ENCODE measurements at regions of chr6 and their contacts with region 1.

Region 1: DNA sequence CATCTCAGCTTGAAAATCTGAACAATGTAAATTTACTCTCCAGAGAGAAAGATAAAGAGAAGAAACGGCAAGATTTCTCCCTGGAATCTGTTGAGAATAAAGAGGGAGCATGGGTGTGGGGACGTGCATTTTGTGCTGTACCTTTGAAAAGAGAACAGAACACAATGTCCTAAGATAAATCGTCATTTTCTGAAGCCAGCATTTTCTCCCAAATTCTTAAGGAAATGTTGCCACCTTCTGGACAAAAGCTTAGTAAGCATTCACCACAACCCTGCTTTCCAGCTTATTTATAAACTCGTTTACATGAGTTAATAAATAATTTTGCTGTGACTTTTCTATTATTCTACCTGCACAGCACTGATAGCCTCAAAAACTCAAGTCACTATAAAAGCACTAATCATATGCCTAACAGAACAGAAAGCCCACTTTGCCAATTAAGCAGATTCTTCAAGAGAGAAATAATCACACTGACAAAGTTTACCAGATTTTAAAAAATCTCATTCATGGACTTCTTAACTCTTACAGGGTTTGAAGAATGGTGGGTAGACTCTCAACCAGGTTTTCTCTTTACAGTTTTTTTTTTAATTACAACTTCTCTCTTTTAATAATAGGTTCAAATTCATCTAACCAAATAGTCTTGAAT is 155.8 kb downstream of the MBOAT1 start:
- DNase-seq: no peak
- H3K4me3 ChIP-seq: no peak overlapping the region
- H3K27ac ChIP-seq: no peak overlapping the region
- H3K4me1 ChIP-seq: no peaks in the 10 kb centered on the region
- H3K27me3 ChIP-seq: no peaks in the 10 kb centered on the region
- CTCF ChIP-seq: peak; percentile 49 to 58

Region 2: DNA sequence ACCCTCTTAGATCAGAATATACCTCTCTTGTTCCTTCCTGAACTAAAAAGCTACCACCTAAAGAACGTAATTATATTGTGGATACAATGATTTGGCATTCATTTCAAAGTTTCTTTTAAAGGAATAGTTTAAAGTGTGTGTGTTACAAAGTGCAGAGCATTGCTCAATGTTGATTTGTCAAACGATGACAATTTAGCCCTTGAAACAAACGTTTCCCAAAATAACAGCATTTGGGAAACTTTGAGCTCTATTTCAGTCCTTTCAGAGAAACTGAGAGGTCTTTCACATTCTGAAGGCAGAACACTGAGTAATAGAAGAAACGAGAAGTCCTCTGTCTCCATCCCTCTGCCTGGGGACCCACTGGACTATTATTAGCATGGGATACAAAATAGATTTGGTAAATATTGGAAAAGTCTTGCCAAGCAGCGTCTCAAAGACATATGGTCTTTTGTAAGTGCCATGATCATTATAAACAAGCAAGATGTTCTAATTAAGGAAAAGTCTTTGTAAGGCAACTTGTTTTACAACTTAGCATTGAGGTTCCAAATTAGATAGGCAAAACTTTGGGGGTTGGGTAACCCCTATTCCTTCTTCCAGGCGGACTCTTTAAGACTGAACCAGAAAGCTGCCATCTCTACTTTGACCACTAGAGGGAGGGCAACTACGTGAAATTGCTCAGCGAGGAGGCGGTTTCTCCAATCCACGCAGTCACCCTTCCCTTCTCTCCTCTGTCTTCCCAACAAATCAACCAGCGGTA is 1460.5 kb before region 1 on chr6:
- intact Hi-C with region 1: loop called (anchors 10 kb)
- DNase-seq: peak; percentile 73 to 77
- H3K4me3 ChIP-seq: peak overlapping the region; percentile 6 to 13
- H3K27ac ChIP-seq: peak overlapping the region; percentile 53 to 63
- H3K4me1 ChIP-seq: peaks cover 0 to 21% (median 5%) of the 10 kb centered on the region in 4 donors
- H3K27me3 ChIP-seq: no peaks in the 10 kb centered on the region
- CTCF ChIP-seq: peak; percentile 88 to 89

Region 3: GRCh38 chr6:18748314-18748713 is 1308.2 kb before region 1 on chr6:
- intact Hi-C with region 1: loop called (anchors 2 kb)
- DNase-seq: no peak
- H3K4me3 ChIP-seq: no peak overlapping the region
- H3K27ac ChIP-seq: no peak overlapping the region
- H3K4me1 ChIP-seq: peaks cover 0 to 9% (median 4%) of the 10 kb centered on the region in 4 donors
- H3K27me3 ChIP-seq: no peaks in the 10 kb centered on the region
- CTCF ChIP-seq: no peak

Region 4: DNA sequence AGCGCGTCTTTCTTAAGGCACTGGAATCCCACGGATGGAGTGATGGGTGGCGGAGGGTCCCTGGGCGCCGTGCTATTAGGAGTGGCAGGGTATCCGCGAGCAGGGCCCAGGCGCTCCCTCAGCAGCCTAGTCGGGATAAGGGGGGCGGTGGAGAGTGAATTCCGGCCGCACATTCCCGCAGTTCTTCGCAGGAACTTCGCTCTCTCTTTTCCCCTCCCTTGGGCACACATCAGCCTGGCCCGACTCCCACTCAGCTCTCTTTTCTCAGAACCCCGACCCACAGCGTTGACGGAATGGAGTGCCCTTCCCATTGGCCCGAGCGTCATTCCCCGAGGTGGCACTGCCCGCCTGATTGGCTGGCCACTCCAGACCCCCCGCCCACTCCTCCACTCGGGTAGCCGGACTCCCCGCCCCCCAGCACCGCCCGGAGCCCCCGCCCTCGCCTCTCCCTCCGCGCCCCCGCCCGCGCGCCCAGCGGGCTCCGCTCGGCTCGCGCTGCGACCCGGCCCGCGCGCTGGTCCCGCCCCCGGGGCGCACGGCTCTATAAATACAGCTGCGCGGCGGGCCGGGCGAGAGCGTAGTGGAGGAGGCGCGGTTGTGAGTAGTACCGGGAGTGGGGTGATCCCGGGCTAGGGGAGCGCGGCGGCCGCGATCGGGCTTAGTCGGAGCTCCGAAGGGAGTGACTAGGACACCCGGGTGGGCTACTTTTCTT is 219.5 kb before region 1 on chr6 and contains the start of gene ID4:
- intact Hi-C with region 1: no loop called
- DNase-seq: peak; percentile 97 to 99
- H3K4me3 ChIP-seq: peak within 1 kb of the TSS; percentile 74 to 78
- H3K27ac ChIP-seq: peak within 1 kb of the TSS; percentile 97 to 98
- H3K4me1 ChIP-seq: peaks cover 0 to 10% (median 0%) of the 10 kb centered on the region in 4 donors
- H3K27me3 ChIP-seq: no peaks in the 10 kb centered on the region
- CTCF ChIP-seq: no peak

Measured in tibial artery (tissue), 4 donors.